ENCODE measurements at regions of chr9 and their contacts with region 1.

Region 1: GRCh38 chr9:89919169-89919681 is 314.4 kb downstream of the GADD45G start:
- DNase-seq: peak; percentile 12
- ATAC-seq: peak; percentile 93
- H3K4me3 ChIP-seq: no peak overlapping the region
- H3K27ac ChIP-seq: no peak overlapping the region
- H3K4me1 ChIP-seq: no peaks in the 10 kb centered on the region
- H3K27me3 ChIP-seq: peaks cover 0 to 1% of the 10 kb centered on the region in 2 experiments; a peak in 3 of 4 replicates
- CTCF ChIP-seq: peak; percentile 45 to 80 (median 63); a peak in 4 of 6 replicates
- EP300 ChIP-seq: no peak
- POLR2A ChIP-seq: no peak
- RAD21 ChIP-seq: peak; percentile 80

Region 2: GRCh38 chr9:89825669-89826068 is 93.6 kb before region 1 on chr9:
- CTCF ChIA-PET with region 1: no interaction called
- POLR2A ChIA-PET with region 1: no interaction called
- RAD21 ChIA-PET with region 1: no interaction called
- SMC1A ChIA-PET with region 1: no interaction called
- in situ Hi-C with region 1: no loop called
- intact Hi-C with region 1: no loop called
- DNase-seq: no peak
- ATAC-seq: no peak
- H3K4me3 ChIP-seq: no peak overlapping the region
- H3K27ac ChIP-seq: no peak overlapping the region
- H3K4me1 ChIP-seq: peaks cover 6% of the 10 kb centered on the region
- H3K27me3 ChIP-seq: no peaks in the 10 kb centered on the region
- CTCF ChIP-seq: no peak
- EP300 ChIP-seq: no peak
- POLR2A ChIP-seq: no peak
- RAD21 ChIP-seq: no peak

Region 3: GRCh38 chr9:89892920-89893319 is 26.3 kb before region 1 on chr9:
- CTCF ChIA-PET with region 1: no interaction called
- POLR2A ChIA-PET with region 1: no interaction called
- RAD21 ChIA-PET with region 1: no interaction called
- SMC1A ChIA-PET with region 1: no interaction called
- in situ Hi-C with region 1: no loop called
- intact Hi-C with region 1: no loop called
- DNase-seq: no peak
- ATAC-seq: no peak
- H3K4me3 ChIP-seq: no peak overlapping the region
- H3K27ac ChIP-seq: no peak overlapping the region
- H3K4me1 ChIP-seq: no peaks in the 10 kb centered on the region
- H3K27me3 ChIP-seq: peaks cover 9 to 11% of the 10 kb centered on the region in 2 experiments
- CTCF ChIP-seq: no peak
- EP300 ChIP-seq: no peak
- POLR2A ChIP-seq: no peak
- RAD21 ChIP-seq: no peak

Region 4: DNA sequence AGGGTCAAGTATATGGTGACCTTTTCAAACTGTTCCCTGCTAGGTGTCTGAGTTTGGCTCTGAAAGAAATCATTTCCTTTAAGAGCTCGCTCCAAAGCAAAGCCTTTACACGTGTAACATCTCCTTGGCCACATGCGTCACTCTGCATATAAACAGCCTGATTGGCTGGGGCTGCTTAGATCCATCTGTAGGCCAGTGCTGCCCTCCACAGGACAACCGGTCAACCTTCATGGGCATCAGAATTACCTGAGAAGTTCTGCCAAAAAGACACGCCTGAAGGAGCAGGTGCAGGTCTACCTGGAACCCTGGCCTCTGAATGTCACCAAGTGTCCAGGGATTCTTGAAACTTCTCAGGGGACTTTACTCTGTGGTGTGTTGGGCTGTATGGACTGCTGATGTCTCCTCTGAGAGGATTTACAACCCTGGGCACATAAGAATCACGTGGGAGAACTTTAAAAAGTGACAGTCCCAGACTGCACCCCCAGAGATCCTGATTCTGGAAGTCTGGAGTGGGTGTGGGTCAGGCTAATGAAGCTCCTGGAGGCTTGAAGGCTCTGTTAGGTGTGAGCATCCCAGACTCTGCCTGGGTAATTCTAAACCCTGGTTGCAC is 183.2 kb after region 1 on chr9:
- CTCF ChIA-PET with region 1: interaction called, 7 read pairs
- POLR2A ChIA-PET with region 1: no interaction called
- RAD21 ChIA-PET with region 1: interaction called, 3 read pairs
- SMC1A ChIA-PET with region 1: interaction called, 4 read pairs
- in situ Hi-C with region 1: no loop called
- intact Hi-C with region 1: loop called (anchors 5 kb)
- DNase-seq: peak; percentile 36
- ATAC-seq: peak; percentile 100
- H3K4me3 ChIP-seq: no peak overlapping the region
- H3K27ac ChIP-seq: no peak overlapping the region
- H3K4me1 ChIP-seq: no peaks in the 10 kb centered on the region
- H3K27me3 ChIP-seq: no peaks in the 10 kb centered on the region; a peak in 2 of 4 replicates
- CTCF ChIP-seq: peak; percentile 72 to 83 (median 81); a peak in 5 of 6 replicates
- EP300 ChIP-seq: no peak
- POLR2A ChIP-seq: no peak
- RAD21 ChIP-seq: peak; percentile 91

Measured in GM12878 (cell line).